ENCODE measurements at regions of chr17 and their contacts with region 1.

Region 1: GRCh38 chr17:2054512-2055291 is at the start of gene HIC1:
- DNase-seq: peak in 1 of 2 experiments; percentile 90
- H3K4me3 ChIP-seq: peak within 1 kb of the TSS; percentile 15 to 58 (median 42)
- H3K27ac ChIP-seq: no peak within 1 kb of the TSS
- H3K4me1 ChIP-seq: peaks cover 0 to 20% (median 11%) of the 10 kb centered on the region in 4 experiments; a peak in 5 of 7 replicates
- H3K27me3 ChIP-seq: peaks cover 78 to 93% (median 91%) of the 10 kb centered on the region in 4 experiments
- CTCF ChIP-seq: peak; percentile 85 to 92 (median 87)
- EP300 ChIP-seq: 0 out of 3 replicates have a peak, but pooled peaks of 1 of the 2 experiments have one; percentile 12
- POLR2A ChIP-seq: no peak
- RAD21 ChIP-seq: peak; percentile 77 to 89
- total RNA-seq, gene HIC1: 0.09 and 0.19 TPM in 2 replicates

Region 2: GRCh38 chr17:1939981-1940809 is 114.5 kb before region 1 on chr17:
- CTCF ChIA-PET with region 1: no interaction called
- POLR2A ChIA-PET with region 1: no interaction called
- DNase-seq: no peak
- H3K4me3 ChIP-seq: no peak overlapping the region
- H3K27ac ChIP-seq: no peak overlapping the region
- H3K4me1 ChIP-seq: no peaks in the 10 kb centered on the region
- H3K27me3 ChIP-seq: no peaks in the 10 kb centered on the region; a peak in 1 of 7 replicates
- CTCF ChIP-seq: no peak
- EP300 ChIP-seq: no peak
- POLR2A ChIP-seq: no peak
- RAD21 ChIP-seq: no peak

Region 3: DNA sequence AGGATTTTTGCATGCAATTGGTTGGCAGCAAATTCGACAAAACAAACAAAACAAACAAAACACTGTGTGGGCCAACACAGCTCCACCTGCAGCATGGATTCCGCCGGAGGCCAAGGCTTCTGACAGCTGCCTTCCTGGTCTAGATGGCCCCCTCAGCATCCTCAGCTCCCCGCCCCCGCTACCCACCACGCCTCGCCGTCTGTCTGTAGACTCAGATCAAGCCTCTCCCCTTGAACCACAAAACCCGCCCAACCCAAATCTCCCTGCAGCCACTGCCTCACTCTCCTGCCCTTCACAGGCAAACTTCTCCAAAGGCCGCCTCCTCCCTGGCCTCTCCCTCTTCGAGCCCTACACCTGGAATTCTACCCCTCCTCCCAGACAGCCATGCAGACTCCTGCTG is 87.5 kb before region 1 on chr17:
- CTCF ChIA-PET with region 1: no interaction called
- POLR2A ChIA-PET with region 1: no interaction called
- DNase-seq: peak in 1 of 2 experiments; percentile 71
- H3K4me3 ChIP-seq: no peak overlapping the region
- H3K27ac ChIP-seq: no peak overlapping the region
- H3K4me1 ChIP-seq: peaks cover 0 to 11% (median 4%) of the 10 kb centered on the region in 4 experiments; a peak in 4 of 7 replicates
- H3K27me3 ChIP-seq: peaks cover 0 to 3% (median 1%) of the 10 kb centered on the region in 4 experiments; a peak in 2 of 7 replicates
- CTCF ChIP-seq: peak in 1 of 3 experiments; percentile 15; a peak in 1 of 4 replicates
- EP300 ChIP-seq: no peak
- POLR2A ChIP-seq: no peak
- RAD21 ChIP-seq: no peak

Region 4: GRCh38 chr17:2064980-2065785 is 10.5 kb after region 1 on chr17:
- CTCF ChIA-PET with region 1: interaction called, 122 read pairs
- POLR2A ChIA-PET with region 1: interaction called, 4 read pairs
- DNase-seq: peak in 1 of 2 experiments; percentile 89
- H3K4me3 ChIP-seq: no peak overlapping the region
- H3K27ac ChIP-seq: no peak overlapping the region
- H3K4me1 ChIP-seq: peaks cover 0 to 13% (median 9%) of the 10 kb centered on the region in 4 experiments; a peak in 6 of 7 replicates
- H3K27me3 ChIP-seq: peaks cover 0 to 11% (median 5%) of the 10 kb centered on the region in 4 experiments; a peak in 5 of 7 replicates
- CTCF ChIP-seq: peak; percentile 70 to 91 (median 90)
- EP300 ChIP-seq: no peak
- POLR2A ChIP-seq: no peak
- RAD21 ChIP-seq: peak; percentile 71 to 73

Region 5: GRCh38 chr17:2083613-2084128 is 29.0 kb after region 1 on chr17:
- CTCF ChIA-PET with region 1: interaction called, 11 read pairs
- POLR2A ChIA-PET with region 1: interaction called, 3 read pairs
- DNase-seq: no peak
- H3K4me3 ChIP-seq: no peak overlapping the region
- H3K27ac ChIP-seq: no peak overlapping the region
- H3K4me1 ChIP-seq: 0 out of 7 replicates have a peak, but pooled peaks cover 0 to 3% (median 0%) of the 10 kb centered on the region in 4 experiments
- H3K27me3 ChIP-seq: no peaks in the 10 kb centered on the region
- CTCF ChIP-seq: no peak
- EP300 ChIP-seq: no peak
- POLR2A ChIP-seq: no peak
- RAD21 ChIP-seq: no peak

Region 6: DNA sequence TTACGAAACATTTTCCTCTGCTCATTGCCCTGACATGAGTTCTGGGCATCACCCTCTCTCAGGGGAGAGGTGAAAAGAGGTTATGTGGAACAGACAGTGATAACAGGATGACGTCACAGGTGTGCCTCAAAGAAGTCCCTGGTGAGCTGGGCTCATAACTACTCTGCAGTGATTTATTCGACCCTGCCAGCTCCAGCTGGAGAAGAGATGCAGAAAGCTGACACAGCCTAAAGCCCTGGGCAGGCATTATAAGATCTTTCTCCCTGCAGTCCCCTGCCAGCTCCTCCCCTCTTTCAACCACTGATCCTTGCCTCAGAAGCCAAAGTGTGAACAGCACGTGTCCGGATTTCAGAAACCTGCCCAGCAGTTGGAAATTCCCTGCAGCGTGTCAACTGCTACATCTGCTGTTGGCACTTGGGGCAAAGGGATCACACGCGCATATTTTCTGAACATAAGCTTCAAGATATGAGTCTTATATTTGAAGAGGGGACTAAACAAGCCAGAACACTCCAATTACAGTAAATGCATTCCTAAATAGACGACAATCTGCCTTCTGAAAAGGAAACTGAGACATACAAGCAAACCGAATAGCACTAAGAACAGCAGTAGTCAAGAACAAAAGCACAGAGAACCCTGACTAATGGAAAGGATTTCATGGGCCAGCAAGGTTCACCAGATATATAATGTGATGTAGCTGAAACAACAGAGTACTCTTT is 168.4 kb after region 1 on chr17:
- CTCF ChIA-PET with region 1: interaction called, 20 read pairs
- POLR2A ChIA-PET with region 1: no interaction called
- DNase-seq: no peak
- H3K4me3 ChIP-seq: no peak overlapping the region
- H3K27ac ChIP-seq: no peak overlapping the region
- H3K4me1 ChIP-seq: no peaks in the 10 kb centered on the region
- H3K27me3 ChIP-seq: no peaks in the 10 kb centered on the region
- CTCF ChIP-seq: no peak
- EP300 ChIP-seq: no peak
- POLR2A ChIP-seq: no peak
- RAD21 ChIP-seq: no peak

Region 7: DNA sequence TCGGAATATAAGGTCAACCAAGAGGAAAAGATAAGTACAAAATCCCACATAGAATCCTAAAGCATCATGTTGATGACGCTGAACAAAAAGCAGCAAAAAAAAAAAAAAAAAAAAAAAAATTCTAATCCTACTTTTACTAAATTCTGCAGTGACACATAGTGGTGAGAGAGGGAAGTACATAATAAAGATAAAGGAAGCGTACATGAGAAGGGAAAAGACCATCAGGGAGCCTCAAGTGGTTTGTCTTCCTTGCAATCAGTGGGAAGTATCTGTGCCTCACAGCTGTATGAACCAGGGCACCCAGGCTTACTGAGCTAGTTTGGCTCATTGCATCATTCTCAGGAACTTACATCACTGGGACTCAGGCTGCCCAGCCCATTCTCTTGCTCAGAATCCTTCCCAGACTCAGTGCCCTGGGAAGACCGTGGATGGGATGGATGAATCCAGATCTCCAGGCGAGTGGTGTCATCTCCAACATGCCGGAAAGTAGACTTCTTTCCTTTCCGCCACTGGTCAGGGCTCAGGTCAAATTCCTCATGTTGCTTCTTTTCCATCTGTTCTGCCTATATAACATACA is 227.7 kb after region 1 on chr17:
- CTCF ChIA-PET with region 1: interaction called, 11 read pairs
- POLR2A ChIA-PET with region 1: interaction called, 3 read pairs
- DNase-seq: no peak
- H3K4me3 ChIP-seq: no peak overlapping the region
- H3K27ac ChIP-seq: no peak overlapping the region
- H3K4me1 ChIP-seq: no peaks in the 10 kb centered on the region; a peak in 1 of 7 replicates
- H3K27me3 ChIP-seq: no peaks in the 10 kb centered on the region
- CTCF ChIP-seq: peak in 2 of 3 experiments; percentile 19 to 37; a peak in 2 of 4 replicates
- EP300 ChIP-seq: no peak
- POLR2A ChIP-seq: no peak
- RAD21 ChIP-seq: peak; percentile 37 to 45

Measured in H1 (cell line).